ENCODE measurements at regions of chr22 and their contacts with region 1.

Region 1: DNA sequence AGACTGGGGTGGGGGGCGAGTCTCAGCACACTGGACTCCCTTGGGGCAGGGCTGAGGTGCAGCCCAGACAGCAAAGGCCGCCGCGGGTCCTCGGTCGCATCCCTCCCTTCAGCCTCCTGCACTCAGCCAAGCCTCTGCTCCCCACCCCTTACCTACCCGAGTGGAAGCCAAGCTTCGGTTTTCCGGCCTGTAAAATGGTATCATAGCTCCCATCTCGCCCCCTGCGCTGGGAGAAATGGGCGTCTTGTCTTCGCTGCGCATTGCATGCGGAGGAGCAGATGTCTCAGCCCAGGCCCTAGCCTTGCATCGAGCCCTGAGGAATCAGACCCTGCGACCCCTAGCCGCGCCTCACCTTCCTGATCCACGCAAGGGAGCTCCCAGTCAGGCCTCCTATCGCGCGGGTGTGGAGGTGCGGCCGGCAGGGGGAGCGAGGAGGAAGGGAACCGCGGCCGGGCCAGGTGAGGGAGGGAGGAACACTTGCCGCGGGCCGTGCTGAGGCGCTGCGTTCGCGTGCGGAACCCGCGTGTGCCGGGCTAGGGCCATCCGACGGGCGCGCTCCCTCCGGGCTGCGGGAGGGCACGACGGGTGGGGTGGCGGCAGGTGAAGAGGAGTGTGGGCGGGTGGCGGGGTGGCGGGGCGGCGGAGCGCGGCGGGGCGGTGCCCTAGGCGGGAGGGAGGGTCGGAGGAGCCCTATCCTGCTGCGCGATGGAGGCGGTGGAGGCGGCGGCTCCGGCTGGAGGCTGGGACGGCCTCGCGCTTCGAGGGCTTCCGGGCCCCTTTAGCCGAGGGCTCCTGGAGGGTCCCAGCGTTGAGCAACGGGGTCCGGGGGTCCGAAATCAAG is 4.1 kb upstream of the TBX1 start:
- DNase-seq: peak; percentile 67
- H3K27ac ChIP-seq: peak overlapping the region; percentile 61
- CTCF ChIP-seq: peak; percentile 83

Region 2: GRCh38 chr22:19745155-19746101 is 11.1 kb before region 1 on chr22:
- CTCF ChIA-PET with region 1: interaction called, 12 read pairs
- POLR2A ChIA-PET with region 1: no interaction called
- DNase-seq: no peak
- H3K27ac ChIP-seq: peak overlapping the region; percentile 27
- CTCF ChIP-seq: no peak

Region 3: GRCh38 chr22:19868773-19869471 is 112.4 kb after region 1 on chr22:
- CTCF ChIA-PET with region 1: no interaction called
- POLR2A ChIA-PET with region 1: no interaction called
- DNase-seq: no peak
- H3K27ac ChIP-seq: peak overlapping the region; percentile 54
- CTCF ChIP-seq: no peak

Region 4: GRCh38 chr22:20141186-20142077 is 384.9 kb after region 1 on chr22:
- CTCF ChIA-PET with region 1: no interaction called
- POLR2A ChIA-PET with region 1: no interaction called
- DNase-seq: no peak
- H3K27ac ChIP-seq: peak overlapping the region; percentile 38
- CTCF ChIP-seq: no peak

Measured in RWPE1 (cell line).